Activated CD4-positive, alpha-beta memory T cell treated with anti-CD3 and anti-CD28 coated beads for 36 hours (primary cell): ENCODE measurements at regions of chr12 and their contacts with region 1.

Region 1: GRCh38 chr12:55659486-55660385 is 23.0 kb downstream of the OR10P1 start:
- DNase-seq: peak; percentile 30
- H3K4me3 Mint-ChIP-seq: no peak overlapping the region
- H3K27ac Mint-ChIP-seq: no peak overlapping the region
- H3K4me1 Mint-ChIP-seq: no peaks in the 10 kb centered on the region
- H3K27me3 Mint-ChIP-seq: no peaks in the 10 kb centered on the region

Region 2: DNA sequence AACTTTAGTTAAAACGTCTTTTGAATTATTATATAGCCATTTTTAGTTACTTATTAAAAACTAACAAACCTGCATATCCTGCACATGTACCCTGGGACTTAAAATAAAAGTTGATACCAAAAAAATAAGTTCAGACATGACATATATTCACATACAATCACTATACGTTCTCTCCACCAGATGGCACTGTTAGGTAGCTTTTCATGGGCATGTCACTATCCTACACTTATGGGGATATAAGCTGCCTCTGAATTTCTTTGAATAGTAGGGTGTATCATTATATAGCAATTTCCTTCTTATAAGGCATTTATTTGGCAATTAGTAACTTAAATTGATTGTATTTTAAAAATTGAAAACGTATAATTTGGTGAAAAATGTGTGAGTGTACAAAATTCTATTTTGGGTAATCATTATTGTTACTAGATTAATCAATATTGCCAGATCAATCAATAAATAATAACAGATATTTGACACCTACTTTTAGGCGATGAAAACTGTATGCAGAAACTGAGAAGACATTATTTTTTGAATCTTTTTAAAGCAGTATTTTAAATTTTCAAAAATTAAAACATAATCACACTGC is 470.7 kb before region 1 on chr12:
- CTCF ChIA-PET with region 1: interaction called, 30 read pairs
- POLR2A ChIA-PET with region 1: no interaction called
- intact Hi-C with region 1: loop called (anchors 1 kb)
- DNase-seq: no peak
- H3K4me3 Mint-ChIP-seq: no peak overlapping the region
- H3K27ac Mint-ChIP-seq: no peak overlapping the region
- H3K4me1 Mint-ChIP-seq: no peaks in the 10 kb centered on the region
- H3K27me3 Mint-ChIP-seq: peaks cover 18% of the 10 kb centered on the region

Region 3: GRCh38 chr12:55194382-55194781 is 465.4 kb before region 1 on chr12:
- CTCF ChIA-PET with region 1: interaction called, 30 read pairs
- POLR2A ChIA-PET with region 1: no interaction called
- intact Hi-C with region 1: loop called (anchors 1 kb)
- DNase-seq: no peak
- H3K4me3 Mint-ChIP-seq: no peak overlapping the region
- H3K27ac Mint-ChIP-seq: no peak overlapping the region
- H3K4me1 Mint-ChIP-seq: no peaks in the 10 kb centered on the region
- H3K27me3 Mint-ChIP-seq: peaks cover 36% of the 10 kb centered on the region

Region 4: GRCh38 chr12:55619354-55620138 is 40.2 kb before region 1 on chr12:
- CTCF ChIA-PET with region 1: interaction called, 23 read pairs
- POLR2A ChIA-PET with region 1: no interaction called
- intact Hi-C with region 1: loop called (anchors 2 kb)
- DNase-seq: no peak
- H3K4me3 Mint-ChIP-seq: no peak overlapping the region
- H3K27ac Mint-ChIP-seq: no peak overlapping the region
- H3K4me1 Mint-ChIP-seq: peaks cover 9% of the 10 kb centered on the region
- H3K27me3 Mint-ChIP-seq: peaks cover 29% of the 10 kb centered on the region

Region 5: GRCh38 chr12:55629058-55629841 is 30.5 kb before region 1 on chr12:
- CTCF ChIA-PET with region 1: interaction called, 13 read pairs
- POLR2A ChIA-PET with region 1: no interaction called
- intact Hi-C with region 1: no loop called
- DNase-seq: peak; percentile 48
- H3K4me3 Mint-ChIP-seq: peak overlapping the region; percentile 1
- H3K27ac Mint-ChIP-seq: peak overlapping the region; percentile 35
- H3K4me1 Mint-ChIP-seq: peaks cover 22% of the 10 kb centered on the region
- H3K27me3 Mint-ChIP-seq: peaks cover 9% of the 10 kb centered on the region

Region 6: GRCh38 chr12:55642669-55643068 is 17.1 kb before region 1 on chr12:
- CTCF ChIA-PET with region 1: interaction called, 122 read pairs
- POLR2A ChIA-PET with region 1: no interaction called
- intact Hi-C with region 1: loop called (anchors 1 kb)
- DNase-seq: peak; percentile 59
- H3K4me3 Mint-ChIP-seq: no peak overlapping the region
- H3K27ac Mint-ChIP-seq: no peak overlapping the region
- H3K4me1 Mint-ChIP-seq: peaks cover 31% of the 10 kb centered on the region
- H3K27me3 Mint-ChIP-seq: no peaks in the 10 kb centered on the region

Region 7: GRCh38 chr12:55687746-55688145 is 28.0 kb after region 1 on chr12:
- CTCF ChIA-PET with region 1: interaction called, 10 read pairs
- POLR2A ChIA-PET with region 1: no interaction called
- intact Hi-C with region 1: no loop called
- DNase-seq: peak; percentile 67
- H3K4me3 Mint-ChIP-seq: no peak overlapping the region
- H3K27ac Mint-ChIP-seq: no peak overlapping the region
- H3K4me1 Mint-ChIP-seq: peaks cover 9% of the 10 kb centered on the region
- H3K27me3 Mint-ChIP-seq: peaks cover 5% of the 10 kb centered on the region

Region 8: DNA sequence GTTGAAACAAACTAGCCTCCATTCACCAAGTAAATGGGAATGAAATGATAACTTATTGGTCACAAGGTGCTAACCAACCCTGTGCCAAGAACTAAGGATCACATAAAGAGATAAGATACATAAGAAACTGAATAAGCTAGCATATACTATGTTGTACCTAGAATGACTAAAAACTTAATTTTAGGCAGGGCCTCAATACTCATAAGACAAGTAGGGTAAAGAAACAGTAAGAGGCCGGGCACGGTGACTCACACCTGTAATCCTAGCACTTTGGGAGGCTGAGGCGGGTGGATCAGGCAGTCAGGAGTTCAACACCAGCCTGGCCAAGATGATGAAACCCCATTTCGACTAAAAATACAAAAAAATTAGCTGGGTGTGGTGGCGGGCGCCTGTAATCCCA is 100.9 kb after region 1 on chr12:
- CTCF ChIA-PET with region 1: no interaction called
- POLR2A ChIA-PET with region 1: no interaction called
- intact Hi-C with region 1: no loop called
- DNase-seq: peak; percentile 85
- H3K4me3 Mint-ChIP-seq: no peak overlapping the region
- H3K27ac Mint-ChIP-seq: peak overlapping the region; percentile 95
- H3K4me1 Mint-ChIP-seq: peaks cover 20% of the 10 kb centered on the region
- H3K27me3 Mint-ChIP-seq: no peaks in the 10 kb centered on the region